ENCODE measurements at regions of chr21 and their contacts with region 1.

Region 1: GRCh38 chr21:14737922-14738321 is 191.8 kb upstream of the SAMSN1 start:
- DNase-seq: peak; percentile 62
- H3K4me3 ChIP-seq: no peak overlapping the region
- H3K27ac ChIP-seq: no peak overlapping the region
- H3K4me1 ChIP-seq: peaks cover 9% of the 10 kb centered on the region
- H3K27me3 ChIP-seq: no peaks in the 10 kb centered on the region
- CTCF ChIP-seq: peak; percentile 50 to 51
- POLR2A ChIP-seq: no peak

Region 2: GRCh38 chr21:14403681-14404318 is 334.1 kb before region 1 on chr21:
- CTCF ChIA-PET with region 1: interaction called, 9 read pairs
- POLR2A ChIA-PET with region 1: no interaction called
- dilution Hi-C with region 1: no loop called
- intact Hi-C with region 1: loop called (anchors 5 kb)
- DNase-seq: peak; percentile 45
- H3K4me3 ChIP-seq: no peak overlapping the region
- H3K27ac ChIP-seq: no peak overlapping the region
- H3K4me1 ChIP-seq: no peaks in the 10 kb centered on the region
- H3K27me3 ChIP-seq: no peaks in the 10 kb centered on the region
- CTCF ChIP-seq: peak; percentile 33 to 49
- POLR2A ChIP-seq: no peak

Region 3: DNA sequence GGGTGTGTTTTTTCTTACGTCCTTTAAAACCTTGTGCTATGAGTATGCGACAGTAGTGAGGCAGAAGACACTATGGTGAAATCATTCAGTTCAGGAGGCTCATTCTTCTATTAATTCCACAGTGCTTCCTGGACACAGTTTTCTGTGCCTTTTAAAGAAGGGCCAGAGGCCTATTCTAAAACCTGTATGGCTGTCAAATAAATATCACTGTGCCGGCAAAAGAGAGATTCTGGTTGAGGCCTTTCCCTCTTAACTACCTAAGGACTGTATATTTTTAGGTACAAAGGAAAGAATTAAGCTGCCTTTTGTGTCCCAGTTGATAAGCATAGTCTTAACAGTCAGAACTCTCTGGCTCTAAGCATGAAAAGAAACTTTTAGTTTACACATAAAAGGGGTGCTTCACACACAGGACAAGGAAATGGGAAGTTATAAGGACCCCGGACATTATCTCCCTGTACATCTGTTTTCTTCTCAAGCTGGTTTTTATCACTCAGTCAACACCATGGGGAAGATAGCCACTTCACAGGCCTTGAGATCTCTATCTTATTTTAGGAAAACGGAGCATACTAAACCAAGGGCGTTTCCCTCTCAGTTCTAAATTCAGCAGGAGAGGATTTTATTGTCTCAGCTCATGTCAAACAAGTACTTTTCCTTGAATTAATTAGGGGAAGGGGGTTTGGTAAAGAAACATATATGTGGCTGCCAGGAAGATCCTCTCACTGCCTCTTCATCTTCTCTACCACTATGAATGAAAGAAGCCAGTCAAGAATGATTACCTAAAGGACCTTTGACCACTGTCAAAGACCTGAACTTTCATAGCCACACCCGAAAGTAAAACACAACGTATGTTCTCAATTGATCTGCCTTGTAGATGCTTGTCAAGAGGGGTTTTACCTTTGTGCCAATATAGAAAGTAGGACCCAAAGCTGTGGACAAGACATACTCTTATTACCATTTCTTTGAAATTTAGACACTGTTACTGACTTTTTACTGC is 283.6 kb before region 1 on chr21:
- CTCF ChIA-PET with region 1: interaction called, 5 read pairs
- POLR2A ChIA-PET with region 1: no interaction called
- dilution Hi-C with region 1: no loop called
- intact Hi-C with region 1: loop called (anchors 10 kb)
- DNase-seq: no peak
- H3K4me3 ChIP-seq: no peak overlapping the region
- H3K27ac ChIP-seq: no peak overlapping the region
- H3K4me1 ChIP-seq: no peaks in the 10 kb centered on the region
- H3K27me3 ChIP-seq: no peaks in the 10 kb centered on the region
- CTCF ChIP-seq: no peak
- POLR2A ChIP-seq: no peak

Region 4: DNA sequence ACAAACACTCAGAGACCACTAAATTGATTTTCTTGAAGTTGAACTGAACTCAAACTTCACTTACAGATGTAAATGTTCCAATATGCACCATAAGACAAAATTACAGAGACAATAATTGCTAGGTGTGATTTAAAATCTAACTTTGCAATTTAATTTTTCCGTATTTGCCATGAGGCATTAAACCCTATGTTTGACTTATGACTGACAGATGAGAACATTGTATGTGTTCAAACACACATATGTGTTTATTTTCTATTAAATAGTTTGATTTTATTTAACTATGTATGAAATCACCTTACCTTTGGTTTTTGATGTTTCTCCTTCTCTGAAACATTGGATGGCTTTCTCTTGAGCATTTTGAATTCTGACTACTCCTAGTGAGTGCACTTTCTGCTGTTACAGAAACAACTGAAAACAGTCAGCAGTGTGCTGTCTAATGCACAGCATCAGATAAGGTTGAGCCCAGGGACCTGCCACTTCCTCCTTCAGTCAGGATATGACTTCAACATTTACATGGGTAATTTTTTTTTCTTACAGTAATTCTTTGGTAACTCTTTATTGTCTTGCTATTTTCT is 191.9 kb before region 1 on chr21 and contains the start of gene SAMSN1:
- CTCF ChIA-PET with region 1: interaction called, 5 read pairs
- POLR2A ChIA-PET with region 1: no interaction called
- dilution Hi-C with region 1: no loop called
- intact Hi-C with region 1: loop called (anchors 5 kb)
- DNase-seq: peak; percentile 85
- H3K4me3 ChIP-seq: peak within 1 kb of the TSS; percentile 12 to 91 (median 49)
- H3K27ac ChIP-seq: peak within 1 kb of the TSS; percentile 79
- H3K4me1 ChIP-seq: peaks cover 45% of the 10 kb centered on the region
- H3K27me3 ChIP-seq: no peaks in the 10 kb centered on the region
- CTCF ChIP-seq: no peak
- POLR2A ChIP-seq: peak; percentile 69
- total RNA-seq, gene SAMSN1: 5.3 and 8.0 TPM in 2 replicates

Region 5: GRCh38 chr21:14712121-14712723 is 25.7 kb before region 1 on chr21:
- CTCF ChIA-PET with region 1: interaction called, 7 read pairs
- POLR2A ChIA-PET with region 1: no interaction called
- dilution Hi-C with region 1: no loop called
- intact Hi-C with region 1: loop called (anchors 1 kb)
- DNase-seq: peak; percentile 78
- H3K4me3 ChIP-seq: no peak overlapping the region
- H3K27ac ChIP-seq: peak overlapping the region; percentile 100
- H3K4me1 ChIP-seq: peaks cover 22% of the 10 kb centered on the region
- H3K27me3 ChIP-seq: no peaks in the 10 kb centered on the region
- CTCF ChIP-seq: no peak
- POLR2A ChIP-seq: no peak

Region 6: DNA sequence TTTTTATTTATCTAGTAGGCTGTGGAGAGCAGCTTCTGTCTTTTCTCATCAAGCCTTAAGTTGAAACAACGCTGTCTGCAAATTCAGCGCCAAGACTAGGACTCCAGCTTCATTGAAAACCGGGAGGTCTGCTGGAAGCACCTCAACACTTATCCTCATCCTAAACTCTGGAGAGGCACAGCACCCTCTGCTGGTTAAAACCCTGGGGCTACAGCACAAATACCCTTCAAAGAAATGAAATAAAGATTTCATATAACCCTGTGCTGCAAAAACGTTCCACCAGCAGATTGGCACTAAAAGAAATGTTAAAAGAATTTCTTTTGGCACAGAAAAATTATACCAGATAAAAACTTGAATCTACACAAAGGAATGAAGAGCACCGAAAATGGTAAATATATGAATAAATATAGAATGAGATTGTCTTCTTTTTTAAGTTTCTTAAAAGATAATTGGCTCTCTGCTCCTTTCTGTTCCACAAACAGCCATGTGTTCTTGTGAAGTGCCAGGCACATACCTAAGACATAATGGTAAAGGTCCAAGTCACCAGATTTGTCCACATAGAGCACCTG is 35.9 kb after region 1 on chr21:
- CTCF ChIA-PET with region 1: interaction called, 8 read pairs
- POLR2A ChIA-PET with region 1: no interaction called
- dilution Hi-C with region 1: no loop called
- intact Hi-C with region 1: loop called (anchors 5 kb)
- DNase-seq: peak; percentile 53
- H3K4me3 ChIP-seq: no peak overlapping the region
- H3K27ac ChIP-seq: no peak overlapping the region
- H3K4me1 ChIP-seq: no peaks in the 10 kb centered on the region
- H3K27me3 ChIP-seq: no peaks in the 10 kb centered on the region
- CTCF ChIP-seq: peak; percentile 61 to 65
- POLR2A ChIP-seq: no peak

Measured in endothelial cell of umbilical vein (primary cell).